ENCODE measurements at regions of chr12 and their contacts with region 1.

Region 1: GRCh38 chr12:96516472-96517430 is 27.4 kb downstream of the CFAP54 start:
- DNase-seq: no peak
- H3K4me3 ChIP-seq: no peak overlapping the region
- CTCF ChIP-seq: peak; percentile 39

Region 2: DNA sequence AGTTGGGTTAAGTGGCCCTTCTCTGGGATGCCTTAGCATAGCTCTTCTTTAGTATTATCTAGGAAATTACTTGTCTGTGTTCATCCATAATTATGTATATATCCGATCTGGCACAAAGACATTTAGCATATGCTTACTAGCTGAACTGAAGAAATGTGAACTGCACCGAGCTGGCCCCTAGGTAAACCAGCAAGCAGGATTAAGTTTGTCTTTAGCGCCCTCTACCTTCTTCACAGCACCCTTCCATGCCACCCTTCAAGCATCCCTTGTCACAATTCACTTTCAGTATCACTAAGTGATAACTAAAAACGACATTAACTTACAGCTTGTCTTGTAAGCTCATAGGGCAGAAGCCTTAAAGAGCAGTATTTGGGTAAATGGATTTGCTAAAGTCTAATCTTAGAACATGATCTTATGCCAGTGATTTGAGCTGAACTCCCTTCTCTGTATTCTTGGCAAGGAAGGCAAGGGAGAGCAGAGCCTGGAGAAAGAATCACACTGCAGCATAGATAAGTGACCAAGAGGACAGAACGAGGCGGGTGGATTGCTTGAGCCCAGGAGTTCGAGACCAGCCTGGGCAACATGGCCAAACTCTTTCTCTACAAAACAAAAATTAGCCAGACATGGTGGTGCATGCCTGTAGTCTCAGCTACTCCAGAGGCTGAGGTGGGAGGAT is 518.0 kb before region 1 on chr12:
- CTCF ChIA-PET with region 1: interaction called, 17 read pairs
- POLR2A ChIA-PET with region 1: no interaction called
- DNase-seq: no peak
- H3K4me3 ChIP-seq: no peak overlapping the region
- CTCF ChIP-seq: peak; percentile 61

Region 3: DNA sequence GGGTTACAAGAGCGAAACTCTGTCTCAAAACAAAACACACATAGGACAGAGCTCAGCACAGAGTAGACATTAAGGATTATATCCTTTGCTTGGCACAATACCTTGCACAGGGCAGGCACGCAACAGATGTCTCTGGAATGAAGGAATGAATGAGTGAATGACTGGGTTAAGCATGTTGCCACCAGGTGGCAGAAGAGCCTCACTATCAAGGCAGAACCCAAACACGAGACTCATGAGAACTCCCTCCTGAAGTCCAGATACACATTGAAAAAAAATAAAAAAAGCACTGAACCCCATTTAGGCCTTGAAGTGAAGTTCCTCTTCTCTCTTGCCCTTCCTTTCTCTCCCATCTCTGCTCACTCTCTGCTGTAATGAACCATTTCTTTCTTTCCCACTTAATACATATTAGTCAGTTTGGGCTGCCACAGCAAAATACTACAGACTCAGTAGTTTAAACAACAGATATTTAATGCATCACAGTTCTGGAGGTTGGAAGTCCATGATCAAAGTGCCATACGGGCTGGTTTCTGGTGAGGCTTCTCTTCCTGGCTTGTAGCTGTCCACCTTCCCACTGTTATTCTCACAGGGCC is 454.8 kb before region 1 on chr12:
- CTCF ChIA-PET with region 1: interaction called, 145 read pairs
- POLR2A ChIA-PET with region 1: no interaction called
- DNase-seq: peak; percentile 50
- H3K4me3 ChIP-seq: no peak overlapping the region
- CTCF ChIP-seq: peak; percentile 74

Region 4: GRCh38 chr12:96219698-96220206 is 297.0 kb before region 1 on chr12:
- CTCF ChIA-PET with region 1: interaction called, 41 read pairs
- POLR2A ChIA-PET with region 1: interaction called, 3 read pairs
- DNase-seq: peak; percentile 92
- H3K4me3 ChIP-seq: peak overlapping the region; percentile 34
- CTCF ChIP-seq: no peak

Region 5: GRCh38 chr12:96489103-96490056 is 27.4 kb before region 1 on chr12 and contains the start of gene CFAP54:
- CTCF ChIA-PET with region 1: interaction called, 14 read pairs
- POLR2A ChIA-PET with region 1: no interaction called
- DNase-seq: no peak
- H3K4me3 ChIP-seq: peak within 1 kb of the TSS; percentile 89
- CTCF ChIP-seq: peak; percentile 90

Region 6: DNA sequence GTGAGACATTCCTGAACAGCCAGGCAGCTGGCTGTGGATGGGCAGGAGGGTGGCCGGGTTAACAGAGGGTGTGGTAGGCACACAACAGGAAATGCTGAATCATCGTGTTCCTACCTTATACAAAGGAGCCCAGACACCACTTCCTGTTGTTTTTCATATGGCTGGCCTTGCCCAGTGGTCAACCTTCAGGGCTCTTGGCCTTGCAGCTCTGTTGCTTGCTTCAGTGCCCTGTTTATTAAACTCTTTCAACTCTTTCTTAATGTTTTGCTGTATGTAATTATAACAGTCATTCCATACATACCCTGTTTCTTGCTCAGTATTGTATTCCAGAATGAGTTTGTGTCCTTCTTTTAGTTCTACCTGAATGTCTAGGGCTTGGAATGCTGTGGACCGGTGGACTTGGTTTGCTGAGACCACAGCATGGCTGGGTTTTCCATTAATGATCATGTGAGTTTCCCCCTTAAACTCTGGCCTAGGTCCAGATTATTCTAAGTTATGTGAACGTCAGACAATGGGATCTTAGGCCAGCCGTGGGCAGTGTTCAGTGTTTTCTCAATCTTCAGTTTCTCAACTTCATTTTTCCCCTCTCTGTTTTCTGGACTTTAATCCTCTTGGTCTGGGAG is 15.5 kb before region 1 on chr12:
- CTCF ChIA-PET with region 1: interaction called, 27 read pairs
- POLR2A ChIA-PET with region 1: no interaction called
- DNase-seq: no peak
- H3K4me3 ChIP-seq: no peak overlapping the region
- CTCF ChIP-seq: no peak

Measured in AG04449 (cell line).